Activated CD8-positive, alpha-beta memory T cell treated with anti-CD3 and anti-CD28 coated beads, Interleukin-2, amount 10 ng/mL, durations not matched to agents 7 days and 5 days (primary cell): ENCODE measurements at regions of chr11 and their contacts with region 1.

Region 1: GRCh38 chr11:6251120-6251733 is 8.4 kb upstream of the CCKBR start:
- DNase-seq: peak; percentile 68
- ATAC-seq: peak; percentile 61
- H3K4me3 Mint-ChIP-seq: no peak overlapping the region
- H3K27ac Mint-ChIP-seq: no peak overlapping the region
- H3K4me1 Mint-ChIP-seq: no peaks in the 10 kb centered on the region
- H3K27me3 Mint-ChIP-seq: peaks cover 11% of the 10 kb centered on the region

Region 2: GRCh38 chr11:6234387-6235107 is 16.7 kb before region 1 on chr11 and contains the start of gene FHIP1B:
- CTCF ChIA-PET with region 1: interaction called, 11 read pairs
- DNase-seq: peak; percentile 100
- ATAC-seq: peak; percentile 94
- H3K4me3 Mint-ChIP-seq: peak within 1 kb of the TSS; percentile 92
- H3K27ac Mint-ChIP-seq: peak within 1 kb of the TSS; percentile 95
- H3K4me1 Mint-ChIP-seq: peaks cover 38% of the 10 kb centered on the region
- H3K27me3 Mint-ChIP-seq: no peaks in the 10 kb centered on the region
- total RNA-seq, gene FHIP1B: 17.3 to 19.9 TPM

Region 3: GRCh38 chr11:6315811-6316425 is 64.7 kb after region 1 on chr11:
- CTCF ChIA-PET with region 1: interaction called, 27 read pairs
- DNase-seq: peak; percentile 55
- ATAC-seq: peak; percentile 55
- H3K4me3 Mint-ChIP-seq: no peak overlapping the region
- H3K27ac Mint-ChIP-seq: no peak overlapping the region
- H3K4me1 Mint-ChIP-seq: peaks cover 14% of the 10 kb centered on the region
- H3K27me3 Mint-ChIP-seq: peaks cover 61% of the 10 kb centered on the region

Region 4: GRCh38 chr11:6353367-6353987 is 102.2 kb after region 1 on chr11:
- CTCF ChIA-PET with region 1: interaction called, 57 read pairs
- DNase-seq: peak; percentile 70
- ATAC-seq: peak; percentile 78
- H3K4me3 Mint-ChIP-seq: no peak overlapping the region
- H3K27ac Mint-ChIP-seq: no peak overlapping the region
- H3K4me1 Mint-ChIP-seq: peaks cover 10% of the 10 kb centered on the region
- H3K27me3 Mint-ChIP-seq: no peaks in the 10 kb centered on the region